Gastrocnemius medialis (tissue), 4 donors: ENCODE measurements at regions of chr18 and their contacts with region 1.

Region 1: GRCh38 chr18:46677611-46678010 is 20.6 kb upstream of the LOXHD1 start:
- DNase-seq: no peak
- ATAC-seq: no peak
- H3K4me3 ChIP-seq: no peak overlapping the region
- H3K27ac ChIP-seq: no peak overlapping the region
- H3K4me1 ChIP-seq: peaks cover 0 to 27% of the 10 kb centered on the region in 2 donors
- H3K27me3 ChIP-seq: no peaks in the 10 kb centered on the region
- CTCF ChIP-seq: peak in 1 of 5 experiments; percentile 8
- POLR2A ChIP-seq: no peak

Region 2: DNA sequence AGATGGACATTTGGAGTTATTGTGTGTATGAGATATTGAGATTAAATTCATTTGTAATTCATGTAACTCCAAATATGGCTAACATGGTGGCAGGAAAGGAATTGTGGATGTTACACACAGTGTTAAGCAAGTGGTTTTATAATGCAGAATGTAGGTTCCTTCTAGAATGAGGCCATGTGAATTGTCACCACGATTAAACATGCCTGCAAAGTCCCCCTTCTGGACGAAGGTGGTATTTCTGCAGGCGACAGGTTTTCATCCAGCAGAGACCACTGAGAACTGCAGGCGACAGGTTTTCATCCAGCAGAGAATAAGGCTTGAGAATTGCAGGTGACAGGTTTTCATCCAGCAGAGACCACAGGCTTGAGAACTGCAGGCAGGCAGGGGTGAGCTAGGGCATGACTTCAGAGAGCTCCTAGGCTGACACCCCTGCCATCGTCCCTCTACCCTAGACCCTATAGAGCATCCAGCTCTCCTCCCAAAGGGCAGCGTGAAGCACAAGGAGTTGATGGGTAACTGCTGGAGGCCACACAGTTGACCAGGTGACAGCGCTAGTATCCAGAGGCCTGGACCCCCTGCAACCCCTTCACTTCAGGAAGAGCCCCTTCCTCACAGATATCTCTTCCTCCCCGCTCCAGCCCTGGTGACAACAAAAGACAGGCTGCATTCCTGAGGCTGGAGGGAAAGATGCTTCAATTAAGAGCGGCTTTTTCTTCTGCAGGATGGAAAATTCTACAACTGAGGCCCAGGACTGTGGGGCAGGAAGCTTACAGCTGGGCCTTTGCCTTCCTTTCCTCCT is 196.4 kb before region 1 on chr18:
- in situ Hi-C with region 1: no loop called
- intact Hi-C with region 1: no loop called
- DNase-seq: peak in 1 of 2 donors; percentile 32
- ATAC-seq: peak in 1 of 2 donors; percentile 76
- H3K4me3 ChIP-seq: no peak overlapping the region
- H3K27ac ChIP-seq: no peak overlapping the region
- H3K4me1 ChIP-seq: no peaks in the 10 kb centered on the region
- H3K27me3 ChIP-seq: no peaks in the 10 kb centered on the region
- CTCF ChIP-seq: peak; percentile 48 to 74 (median 63)
- POLR2A ChIP-seq: no peak

Region 3: GRCh38 chr18:46750626-46751025 is 73.0 kb after region 1 on chr18:
- in situ Hi-C with region 1: no loop called
- intact Hi-C with region 1: no loop called
- DNase-seq: no peak
- ATAC-seq: no peak
- H3K4me3 ChIP-seq: no peak overlapping the region
- H3K27ac ChIP-seq: no peak overlapping the region
- H3K4me1 ChIP-seq: peaks cover 4 to 12% of the 10 kb centered on the region in 2 donors
- H3K27me3 ChIP-seq: no peaks in the 10 kb centered on the region
- CTCF ChIP-seq: no peak
- POLR2A ChIP-seq: no peak

Region 4: GRCh38 chr18:46859855-46860254 is 182.2 kb after region 1 on chr18:
- in situ Hi-C with region 1: no loop called
- intact Hi-C with region 1: loop called (anchors 10 kb)
- DNase-seq: no peak
- ATAC-seq: no peak
- H3K4me3 ChIP-seq: no peak overlapping the region
- H3K27ac ChIP-seq: no peak overlapping the region
- H3K4me1 ChIP-seq: peaks cover 16 to 18% of the 10 kb centered on the region in 2 donors
- H3K27me3 ChIP-seq: no peaks in the 10 kb centered on the region
- CTCF ChIP-seq: no peak
- POLR2A ChIP-seq: no peak